Activated CD8-positive, alpha-beta T cell treated with anti-CD3 and anti-CD28 coated beads for 36 hours (primary cell): ENCODE measurements at regions of chr7 and their contacts with region 1.

Region 1: GRCh38 chr7:106041140-106041717 is 70.9 kb downstream of the SYPL1 start:
- DNase-seq: peak; percentile 50
- ATAC-seq: peak; percentile 59
- H3K4me3 Mint-ChIP-seq: no peak overlapping the region
- H3K27ac Mint-ChIP-seq: no peak overlapping the region
- H3K4me1 Mint-ChIP-seq: peaks cover 28% of the 10 kb centered on the region
- H3K27me3 Mint-ChIP-seq: no peaks in the 10 kb centered on the region
- CTCF ChIP-seq: peak; percentile 82

Region 2: GRCh38 chr7:105691733-105692564 is 349.3 kb before region 1 on chr7:
- CTCF ChIA-PET with region 1: interaction called, 11 read pairs
- POLR2A ChIA-PET with region 1: no interaction called
- intact Hi-C with region 1: no loop called
- DNase-seq: peak; percentile 88
- ATAC-seq: peak; percentile 61
- H3K4me3 Mint-ChIP-seq: peak overlapping the region; percentile 90
- H3K27ac Mint-ChIP-seq: peak overlapping the region; percentile 95
- H3K4me1 Mint-ChIP-seq: peaks cover 38% of the 10 kb centered on the region
- H3K27me3 Mint-ChIP-seq: no peaks in the 10 kb centered on the region
- CTCF ChIP-seq: no peak

Region 3: GRCh38 chr7:105759670-105760550 is 281.3 kb before region 1 on chr7:
- CTCF ChIA-PET with region 1: interaction called, 85 read pairs
- POLR2A ChIA-PET with region 1: no interaction called
- intact Hi-C with region 1: loop called (anchors 2 kb)
- DNase-seq: peak; percentile 40
- ATAC-seq: no peak
- H3K4me3 Mint-ChIP-seq: no peak overlapping the region
- H3K27ac Mint-ChIP-seq: no peak overlapping the region
- H3K4me1 Mint-ChIP-seq: peaks cover 26% of the 10 kb centered on the region
- H3K27me3 Mint-ChIP-seq: no peaks in the 10 kb centered on the region
- CTCF ChIP-seq: peak; percentile 82

Region 4: DNA sequence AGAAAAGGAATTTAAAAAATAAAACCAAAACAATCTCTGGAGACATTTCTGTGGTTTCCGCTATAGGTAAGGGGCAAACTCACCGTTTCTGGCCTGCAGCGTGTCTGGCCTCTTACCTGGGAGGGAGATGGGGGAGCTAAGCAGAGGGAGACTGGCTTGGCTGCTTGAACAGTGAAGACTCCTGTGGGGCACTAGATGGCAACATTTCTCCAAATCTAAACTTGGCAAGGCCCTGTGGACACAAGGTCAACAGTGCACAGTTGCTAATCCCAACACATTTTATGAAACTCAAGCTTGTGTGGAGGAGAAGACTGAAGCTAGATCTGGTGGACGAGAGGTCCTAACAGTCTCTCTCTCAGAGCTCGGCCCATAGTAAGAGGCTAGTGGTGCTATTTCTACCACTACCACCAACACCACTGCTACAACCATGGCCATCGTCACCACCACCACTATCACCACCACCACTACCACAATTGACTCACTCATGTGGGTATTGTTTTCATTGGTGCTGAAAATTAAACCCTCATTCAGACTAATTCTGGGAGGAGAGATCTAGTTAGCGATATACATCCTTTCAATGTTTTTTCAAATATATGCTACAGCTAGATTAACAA is 106.5 kb before region 1 on chr7:
- CTCF ChIA-PET with region 1: interaction called, 16 read pairs
- POLR2A ChIA-PET with region 1: no interaction called
- intact Hi-C with region 1: loop called (anchors 10 kb)
- DNase-seq: peak; percentile 14
- ATAC-seq: peak; percentile 64
- H3K4me3 Mint-ChIP-seq: no peak overlapping the region
- H3K27ac Mint-ChIP-seq: no peak overlapping the region
- H3K4me1 Mint-ChIP-seq: no peaks in the 10 kb centered on the region
- H3K27me3 Mint-ChIP-seq: no peaks in the 10 kb centered on the region
- CTCF ChIP-seq: peak; percentile 17

Region 5: GRCh38 chr7:106022193-106022821 is 18.9 kb before region 1 on chr7:
- CTCF ChIA-PET with region 1: interaction called, 104 read pairs
- POLR2A ChIA-PET with region 1: interaction called, 6 read pairs
- intact Hi-C with region 1: no loop called
- DNase-seq: peak; percentile 84
- ATAC-seq: peak; percentile 86
- H3K4me3 Mint-ChIP-seq: peak overlapping the region; percentile 22
- H3K27ac Mint-ChIP-seq: peak overlapping the region; percentile 77
- H3K4me1 Mint-ChIP-seq: peaks cover 56% of the 10 kb centered on the region
- H3K27me3 Mint-ChIP-seq: no peaks in the 10 kb centered on the region
- CTCF ChIP-seq: no peak